ENCODE measurements at regions of chr1 and their contacts with region 1.

Region 1: DNA sequence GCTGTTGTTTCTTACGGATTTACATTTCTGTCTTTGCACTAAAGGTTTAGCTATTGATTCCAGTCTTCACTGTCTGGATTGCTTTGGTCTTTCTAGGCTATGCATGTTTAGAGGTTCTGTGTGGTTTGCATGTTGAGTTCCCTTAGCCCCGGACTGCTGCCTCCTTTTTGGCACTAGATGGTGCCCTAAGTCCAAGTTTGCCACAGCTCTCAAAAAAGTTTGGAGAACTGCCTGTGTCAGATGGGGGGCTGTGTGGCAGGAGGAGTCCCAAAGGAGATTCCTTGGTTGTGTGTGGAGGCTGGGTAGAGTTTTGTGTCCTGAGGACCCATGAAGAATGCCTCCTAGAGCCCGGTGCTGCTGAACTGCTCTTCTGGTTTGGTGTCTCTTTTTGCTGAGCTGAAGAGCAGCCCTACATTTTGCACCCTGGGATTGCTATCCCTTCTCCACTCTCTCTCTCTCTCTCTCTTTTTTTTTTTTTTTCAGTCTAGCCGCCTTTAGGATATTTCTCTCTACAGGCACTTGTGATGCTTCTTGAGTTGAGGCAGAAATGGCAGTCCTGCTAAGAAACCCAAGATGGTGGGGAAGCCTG is 74.4 kb downstream of the PTGS2 start:
- DNase-seq: no peak
- H3K4me3 ChIP-seq: no peak overlapping the region
- H3K27ac ChIP-seq: no peak overlapping the region
- H3K4me1 ChIP-seq: no peaks in the 10 kb centered on the region
- H3K27me3 ChIP-seq: no peaks in the 10 kb centered on the region
- CTCF ChIP-seq: peak in 1 of 3 donors; percentile 36
- POLR2A ChIP-seq: no peak

Region 2: GRCh38 chr1:186985889-186986491 is 380.1 kb after region 1 on chr1:
- intact Hi-C with region 1: loop called (anchors 10 kb)
- DNase-seq: no peak
- H3K4me3 ChIP-seq: no peak overlapping the region
- H3K27ac ChIP-seq: no peak overlapping the region
- H3K4me1 ChIP-seq: no peaks in the 10 kb centered on the region
- H3K27me3 ChIP-seq: no peaks in the 10 kb centered on the region
- CTCF ChIP-seq: peak in 2 of 3 donors; percentile 67 to 82
- POLR2A ChIP-seq: no peak

Region 3: GRCh38 chr1:187294421-187295201 is 688.8 kb after region 1 on chr1:
- intact Hi-C with region 1: loop called (anchors 5 kb)
- DNase-seq: no peak
- H3K4me3 ChIP-seq: no peak overlapping the region
- H3K27ac ChIP-seq: no peak overlapping the region
- H3K4me1 ChIP-seq: no peaks in the 10 kb centered on the region
- H3K27me3 ChIP-seq: no peaks in the 10 kb centered on the region
- CTCF ChIP-seq: no peak
- POLR2A ChIP-seq: no peak